ENCODE measurements at regions of chr10 and their contacts with region 1.

Region 1: GRCh38 chr10:75187961-75188426 is 22.6 kb upstream of the VDAC2 start:
- DNase-seq: peak; percentile 66
- H3K4me3 ChIP-seq: no peak overlapping the region
- H3K27ac ChIP-seq: no peak overlapping the region
- H3K4me1 ChIP-seq: peaks cover 7% of the 10 kb centered on the region
- H3K27me3 ChIP-seq: no peaks in the 10 kb centered on the region
- CTCF ChIP-seq: peak; percentile 62 to 73
- POLR2A ChIP-seq: no peak

Region 2: DNA sequence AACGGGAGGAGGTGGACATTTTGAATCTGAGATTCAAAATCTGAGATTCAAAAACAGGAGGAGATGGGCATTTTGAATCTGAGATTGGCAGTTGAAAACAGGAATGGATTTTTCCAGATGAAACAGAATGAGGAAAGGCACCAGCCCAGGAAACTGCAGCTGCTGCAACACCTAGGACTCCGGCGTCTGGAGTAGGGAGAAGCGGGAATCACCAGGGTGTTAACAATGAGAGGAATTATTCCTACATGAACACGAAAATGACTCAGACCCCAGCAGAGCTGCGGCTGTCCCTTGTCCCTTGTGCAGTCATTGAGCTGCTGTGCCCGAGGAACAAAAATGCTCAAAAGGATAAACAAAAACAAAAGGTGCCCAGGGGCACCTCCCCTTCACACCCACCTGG is 421.5 kb before region 1 on chr10:
- CTCF ChIA-PET with region 1: no interaction called
- POLR2A ChIA-PET with region 1: no interaction called
- dilution Hi-C with region 1: no loop called
- intact Hi-C with region 1: no loop called
- DNase-seq: no peak
- H3K4me3 ChIP-seq: no peak overlapping the region
- H3K27ac ChIP-seq: no peak overlapping the region
- H3K4me1 ChIP-seq: no peaks in the 10 kb centered on the region
- H3K27me3 ChIP-seq: peaks cover 0 to 4% of the 10 kb centered on the region in 2 experiments
- CTCF ChIP-seq: no peak
- POLR2A ChIP-seq: no peak

Region 3: GRCh38 chr10:75201793-75202307 is 13.9 kb after region 1 on chr10:
- CTCF ChIA-PET with region 1: interaction called, 13 read pairs
- POLR2A ChIA-PET with region 1: no interaction called
- dilution Hi-C with region 1: no loop called
- intact Hi-C with region 1: no loop called
- DNase-seq: no peak
- H3K4me3 ChIP-seq: no peak overlapping the region
- H3K27ac ChIP-seq: no peak overlapping the region
- H3K4me1 ChIP-seq: no peaks in the 10 kb centered on the region
- H3K27me3 ChIP-seq: no peaks in the 10 kb centered on the region
- CTCF ChIP-seq: no peak
- POLR2A ChIP-seq: no peak

Region 4: GRCh38 chr10:75210282-75211006 is 22.4 kb after region 1 on chr10 and contains the start of gene VDAC2:
- CTCF ChIA-PET with region 1: interaction called, 22 read pairs
- POLR2A ChIA-PET with region 1: interaction called, 3 read pairs
- dilution Hi-C with region 1: no loop called
- intact Hi-C with region 1: loop called (anchors 2 kb)
- DNase-seq: peak; percentile 90
- H3K4me3 ChIP-seq: peak within 1 kb of the TSS; percentile 63 to 99 (median 96)
- H3K27ac ChIP-seq: peak within 1 kb of the TSS; percentile 94
- H3K4me1 ChIP-seq: peaks cover 21% of the 10 kb centered on the region
- H3K27me3 ChIP-seq: no peaks in the 10 kb centered on the region
- CTCF ChIP-seq: no peak
- POLR2A ChIP-seq: peak; percentile 91
- total RNA-seq, gene VDAC2: 220 and 222 TPM in 2 replicates

Region 5: DNA sequence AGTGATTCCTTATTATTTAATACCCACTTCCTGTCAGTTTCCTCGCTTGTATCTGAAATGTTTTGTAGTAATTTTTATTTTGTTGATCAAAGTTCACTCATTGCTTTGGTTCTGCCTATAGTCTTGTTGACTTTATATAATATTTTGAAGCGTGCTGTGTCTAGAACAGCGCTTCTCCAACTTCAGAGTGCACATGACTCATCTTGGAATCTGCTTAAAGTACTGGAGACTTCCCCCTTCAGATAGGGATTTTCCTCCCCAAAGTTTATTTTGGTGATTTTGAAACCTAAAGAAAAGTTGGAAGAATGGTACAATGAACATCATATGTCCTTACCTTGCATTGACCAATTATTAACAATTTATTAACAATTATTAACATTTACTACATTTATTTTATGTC is 42.0 kb after region 1 on chr10:
- CTCF ChIA-PET with region 1: interaction called, 61 read pairs
- POLR2A ChIA-PET with region 1: no interaction called
- dilution Hi-C with region 1: no loop called
- intact Hi-C with region 1: loop called (anchors 1 kb)
- DNase-seq: peak; percentile 50
- H3K4me3 ChIP-seq: no peak overlapping the region
- H3K27ac ChIP-seq: peak overlapping the region; percentile 38
- H3K4me1 ChIP-seq: peaks cover 46% of the 10 kb centered on the region
- H3K27me3 ChIP-seq: no peaks in the 10 kb centered on the region
- CTCF ChIP-seq: no peak
- POLR2A ChIP-seq: no peak

Region 6: GRCh38 chr10:75272896-75273295 is 84.9 kb after region 1 on chr10:
- CTCF ChIA-PET with region 1: no interaction called
- POLR2A ChIA-PET with region 1: no interaction called
- dilution Hi-C with region 1: no loop called
- intact Hi-C with region 1: no loop called
- DNase-seq: no peak
- H3K4me3 ChIP-seq: no peak overlapping the region
- H3K27ac ChIP-seq: no peak overlapping the region
- H3K4me1 ChIP-seq: no peaks in the 10 kb centered on the region
- H3K27me3 ChIP-seq: no peaks in the 10 kb centered on the region
- CTCF ChIP-seq: no peak
- POLR2A ChIP-seq: no peak

Region 7: GRCh38 chr10:75395066-75395931 is 207.3 kb after region 1 on chr10:
- CTCF ChIA-PET with region 1: no interaction called
- POLR2A ChIA-PET with region 1: no interaction called
- dilution Hi-C with region 1: no loop called
- intact Hi-C with region 1: no loop called
- DNase-seq: peak; percentile 27
- H3K4me3 ChIP-seq: peak overlapping the region in 1 of 3 experiments; percentile 11
- H3K27ac ChIP-seq: no peak overlapping the region
- H3K4me1 ChIP-seq: peaks cover 30% of the 10 kb centered on the region
- H3K27me3 ChIP-seq: peaks cover 6 to 25% of the 10 kb centered on the region in 2 experiments
- CTCF ChIP-seq: peak; percentile 83 to 92
- POLR2A ChIP-seq: no peak